ENCODE measurements at regions of chr7 and their contacts with region 1.

Region 1: DNA sequence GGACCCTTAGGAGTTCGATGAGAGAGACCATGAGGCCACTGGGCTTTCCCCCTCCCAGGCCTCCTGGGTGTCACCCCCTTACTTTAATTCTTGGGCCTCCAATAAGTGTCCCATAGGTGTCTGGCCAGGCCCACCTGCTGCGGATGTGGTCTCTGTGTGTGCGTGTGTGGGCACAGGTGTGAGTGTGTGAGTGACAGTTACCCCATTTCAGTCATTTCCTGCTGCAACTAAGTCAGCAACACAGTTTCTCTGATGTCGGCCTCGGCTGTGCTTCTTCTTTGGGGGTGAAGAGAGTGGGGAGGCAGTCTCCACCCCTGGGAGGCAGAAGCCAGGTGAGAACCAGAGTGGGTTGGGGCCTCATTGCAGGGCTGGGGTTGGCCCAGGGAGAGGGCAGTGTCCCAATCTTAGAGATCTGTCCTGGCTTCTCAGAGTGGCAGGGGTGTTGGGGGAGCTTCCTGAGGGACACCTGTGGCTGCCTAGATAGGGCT is 1.5 kb downstream of the PVRIG start:
- DNase-seq: peak; percentile 87 to 94 (median 88)
- H3K4me3 ChIP-seq: peak overlapping the region; percentile 84 to 91
- H3K4me3 Mint-ChIP-seq: peak overlapping the region; percentile 92 to 98 (median 96)
- H3K27ac ChIP-seq: peak overlapping the region; percentile 90
- H3K27ac Mint-ChIP-seq: peak overlapping the region; percentile 96 to 99 (median 99)
- H3K4me1 ChIP-seq: peaks cover 69% of the 10 kb centered on the region
- H3K4me1 Mint-ChIP-seq: peaks cover 28 to 75% (median 57%) of the 10 kb centered on the region in 4 donors
- H3K27me3 ChIP-seq: no peaks in the 10 kb centered on the region
- H3K27me3 Mint-ChIP-seq: no peaks in the 10 kb centered on the region

Region 2: DNA sequence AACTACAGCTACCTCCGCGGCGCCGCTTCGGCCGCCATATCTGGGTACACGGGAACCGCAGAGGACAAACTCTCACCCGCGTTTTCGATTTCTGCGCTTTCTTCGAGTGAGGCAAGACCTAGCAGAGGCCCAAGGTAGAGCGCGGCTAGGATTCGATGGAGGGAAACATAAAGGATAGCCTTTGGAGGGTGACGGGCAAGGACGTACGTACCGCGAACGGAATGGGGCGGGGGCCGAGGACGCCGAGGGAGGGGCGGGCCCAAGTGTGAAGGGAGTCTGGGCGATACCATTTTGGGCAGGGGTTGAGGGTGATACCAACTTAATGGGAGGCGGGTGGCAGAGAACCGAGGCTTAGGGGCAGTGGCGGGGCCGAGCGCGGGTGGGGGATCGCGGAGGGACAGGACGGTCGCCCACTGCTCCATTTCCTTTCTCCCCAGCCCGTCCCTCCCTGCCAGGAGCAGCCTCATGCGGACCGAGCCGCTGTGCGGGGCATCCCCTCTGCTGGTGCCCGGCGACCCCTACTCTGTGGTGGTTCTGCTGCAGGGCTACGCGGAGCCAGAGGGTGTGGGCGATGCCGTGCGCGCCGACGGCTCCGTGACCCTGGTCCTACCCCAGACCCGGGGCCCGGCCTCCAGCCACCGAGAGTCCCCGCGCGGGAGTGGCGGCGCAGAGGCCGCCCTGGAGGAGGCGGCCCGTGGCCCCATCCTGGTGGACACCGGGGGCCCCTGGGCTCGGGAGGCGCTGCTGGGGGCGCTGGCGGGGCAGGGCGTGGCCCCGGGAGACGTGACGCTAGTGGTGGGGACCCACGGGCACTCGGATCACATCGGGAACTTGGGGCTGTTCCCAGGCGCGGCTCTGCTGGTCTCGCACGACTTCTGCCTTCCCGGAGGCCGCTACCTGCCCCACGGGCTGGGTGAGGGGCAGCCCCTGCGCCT is 94.1 kb before region 1 on chr7 and contains the start of gene MBLAC1:
- CTCF ChIA-PET with region 1: interaction called, 108 read pairs
- POLR2A ChIA-PET with region 1: interaction called, 26 read pairs
- intact Hi-C with region 1: loop called (anchors 1 kb)
- DNase-seq: peak; percentile 92 to 94 (median 93)
- H3K4me3 ChIP-seq: peak within 1 kb of the TSS; percentile 94 to 98
- H3K4me3 Mint-ChIP-seq: peak within 1 kb of the TSS; percentile 96 to 100 (median 99)
- H3K27ac ChIP-seq: peak within 1 kb of the TSS; percentile 87
- H3K27ac Mint-ChIP-seq: peak within 1 kb of the TSS; percentile 98 to 100 (median 100)
- H3K4me1 ChIP-seq: peaks cover 43% of the 10 kb centered on the region
- H3K4me1 Mint-ChIP-seq: peaks cover 20 to 46% (median 26%) of the 10 kb centered on the region in 4 donors
- H3K27me3 ChIP-seq: no peaks in the 10 kb centered on the region
- H3K27me3 Mint-ChIP-seq: no peaks in the 10 kb centered on the region
- total RNA-seq, gene MBLAC1: 6.4 to 6.8 TPM

Region 3: DNA sequence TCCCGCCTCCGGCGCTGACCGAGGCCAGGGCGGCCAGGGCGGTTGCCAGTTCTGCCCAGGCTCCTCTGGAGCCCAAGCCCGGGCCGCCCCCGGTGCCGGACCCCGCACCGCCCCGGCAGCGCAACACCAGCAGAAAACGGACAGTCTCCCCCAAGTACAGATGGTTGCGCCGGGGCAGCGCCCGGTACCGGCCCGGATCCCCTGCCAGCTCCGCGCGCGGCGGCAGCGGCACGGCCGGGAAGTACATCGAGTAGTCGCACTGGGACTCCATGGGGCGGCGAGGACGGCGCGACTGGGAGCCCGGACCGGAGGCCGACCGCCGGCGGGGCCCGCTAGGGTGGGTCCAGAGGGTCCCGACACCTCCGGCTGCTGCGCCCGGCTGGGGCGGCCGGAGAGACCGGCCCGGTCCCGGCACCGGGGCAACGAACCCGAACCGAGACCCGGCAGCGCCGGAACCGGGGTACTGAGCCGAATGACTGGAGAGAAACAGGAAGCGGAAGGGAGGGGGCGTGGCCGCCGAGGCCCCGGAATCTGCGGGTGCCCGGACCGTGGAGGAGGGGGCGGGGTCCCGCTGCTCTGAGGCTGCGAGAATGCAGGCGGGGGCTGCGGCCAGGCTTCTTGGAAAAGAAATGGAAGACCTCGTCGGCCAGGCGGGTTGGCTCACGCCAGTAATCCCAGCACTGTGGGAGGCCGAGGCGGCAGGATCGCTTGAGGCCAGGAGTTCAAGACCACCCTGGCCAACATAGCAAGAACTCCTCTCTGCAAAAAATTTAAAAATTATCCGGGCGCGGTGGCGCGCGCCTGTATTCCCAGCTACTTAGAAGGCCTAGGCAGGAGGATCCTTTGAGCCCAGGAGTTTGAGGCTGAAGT is 62.8 kb before region 1 on chr7 and contains the start of gene TRAPPC14:
- CTCF ChIA-PET with region 1: interaction called, 7 read pairs
- POLR2A ChIA-PET with region 1: interaction called, 13 read pairs
- intact Hi-C with region 1: no loop called
- DNase-seq: peak; percentile 86 to 93 (median 87)
- H3K4me3 ChIP-seq: peak within 1 kb of the TSS; percentile 52 to 74
- H3K4me3 Mint-ChIP-seq: peak within 1 kb of the TSS; percentile 86 to 90 (median 88)
- H3K27ac ChIP-seq: peak within 1 kb of the TSS; percentile 80
- H3K27ac Mint-ChIP-seq: peak within 1 kb of the TSS; percentile 86 to 96 (median 92)
- H3K4me1 ChIP-seq: peaks cover 49% of the 10 kb centered on the region
- H3K4me1 Mint-ChIP-seq: peaks cover 25 to 79% (median 44%) of the 10 kb centered on the region in 4 donors
- H3K27me3 ChIP-seq: no peaks in the 10 kb centered on the region
- H3K27me3 Mint-ChIP-seq: no peaks in the 10 kb centered on the region
- total RNA-seq, gene TRAPPC14: 68.7 to 73.0 TPM

Region 4: GRCh38 chr7:100195222-100195621 is 26.1 kb before region 1 on chr7:
- CTCF ChIA-PET with region 1: interaction called, 23 read pairs
- POLR2A ChIA-PET with region 1: interaction called, 7 read pairs
- intact Hi-C with region 1: loop called (anchors 1 kb)
- DNase-seq: no peak
- H3K4me3 ChIP-seq: no peak overlapping the region
- H3K4me3 Mint-ChIP-seq: no peak overlapping the region
- H3K27ac ChIP-seq: no peak overlapping the region
- H3K27ac Mint-ChIP-seq: no peak overlapping the region
- H3K4me1 ChIP-seq: no peaks in the 10 kb centered on the region
- H3K4me1 Mint-ChIP-seq: peaks cover 0 to 3% (median 1%) of the 10 kb centered on the region in 4 donors
- H3K27me3 ChIP-seq: no peaks in the 10 kb centered on the region
- H3K27me3 Mint-ChIP-seq: peaks cover 0 to 2% of the 10 kb centered on the region in 2 donors

Region 5: DNA sequence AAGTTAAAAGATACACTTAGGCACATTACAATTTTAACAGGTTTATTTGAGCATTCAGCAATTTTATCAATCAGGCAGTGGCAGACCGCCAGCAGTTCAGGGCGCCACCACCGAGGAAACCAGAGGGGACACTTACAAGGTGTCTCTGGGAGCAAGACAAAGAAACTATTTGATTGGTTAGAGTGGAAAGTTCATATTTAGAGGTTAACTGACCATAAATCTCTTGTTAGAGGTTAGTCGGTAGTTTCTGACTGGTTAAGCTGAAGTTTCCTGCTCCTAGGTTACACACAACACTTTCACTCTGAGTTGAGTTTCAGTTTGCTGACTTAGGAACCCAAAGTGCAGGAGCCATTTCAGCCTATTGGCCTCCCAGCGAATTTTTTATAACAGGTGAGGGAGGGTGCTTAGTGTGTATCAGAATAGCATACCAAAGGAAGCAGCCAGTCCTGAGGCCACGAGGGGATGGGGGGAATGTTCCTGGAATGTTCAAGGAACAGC is 12.3 kb before region 1 on chr7:
- CTCF ChIA-PET with region 1: interaction called, 13 read pairs
- POLR2A ChIA-PET with region 1: interaction called, 29 read pairs
- intact Hi-C with region 1: no loop called
- DNase-seq: peak in 3 of 5 donors; percentile 16 to 37 (median 20)
- H3K4me3 ChIP-seq: no peak overlapping the region
- H3K4me3 Mint-ChIP-seq: peak overlapping the region; percentile 58 to 80 (median 75)
- H3K27ac ChIP-seq: no peak overlapping the region
- H3K27ac Mint-ChIP-seq: peak overlapping the region; percentile 66 to 91 (median 84)
- H3K4me1 ChIP-seq: peaks cover 37% of the 10 kb centered on the region
- H3K4me1 Mint-ChIP-seq: peaks cover 32 to 43% (median 36%) of the 10 kb centered on the region in 4 donors
- H3K27me3 ChIP-seq: no peaks in the 10 kb centered on the region
- H3K27me3 Mint-ChIP-seq: no peaks in the 10 kb centered on the region

Region 6: GRCh38 chr7:100342765-100343164 is 121.5 kb after region 1 on chr7:
- CTCF ChIA-PET with region 1: interaction called, 13 read pairs
- POLR2A ChIA-PET with region 1: interaction called, 4 read pairs
- intact Hi-C with region 1: loop called (anchors 2 kb)
- DNase-seq: no peak
- H3K4me3 ChIP-seq: no peak overlapping the region
- H3K4me3 Mint-ChIP-seq: peak overlapping the region in 1 of 8 donors; percentile 43
- H3K27ac ChIP-seq: no peak overlapping the region
- H3K27ac Mint-ChIP-seq: peak overlapping the region; percentile 83 to 92 (median 87)
- H3K4me1 ChIP-seq: peaks cover 21% of the 10 kb centered on the region
- H3K4me1 Mint-ChIP-seq: peaks cover 14 to 34% (median 19%) of the 10 kb centered on the region in 4 donors
- H3K27me3 ChIP-seq: no peaks in the 10 kb centered on the region
- H3K27me3 Mint-ChIP-seq: no peaks in the 10 kb centered on the region

Measured in CD4-positive, alpha-beta memory T cell (primary cell).